ENCODE measurements at regions of chr7 and their contacts with region 1.

Region 1: DNA sequence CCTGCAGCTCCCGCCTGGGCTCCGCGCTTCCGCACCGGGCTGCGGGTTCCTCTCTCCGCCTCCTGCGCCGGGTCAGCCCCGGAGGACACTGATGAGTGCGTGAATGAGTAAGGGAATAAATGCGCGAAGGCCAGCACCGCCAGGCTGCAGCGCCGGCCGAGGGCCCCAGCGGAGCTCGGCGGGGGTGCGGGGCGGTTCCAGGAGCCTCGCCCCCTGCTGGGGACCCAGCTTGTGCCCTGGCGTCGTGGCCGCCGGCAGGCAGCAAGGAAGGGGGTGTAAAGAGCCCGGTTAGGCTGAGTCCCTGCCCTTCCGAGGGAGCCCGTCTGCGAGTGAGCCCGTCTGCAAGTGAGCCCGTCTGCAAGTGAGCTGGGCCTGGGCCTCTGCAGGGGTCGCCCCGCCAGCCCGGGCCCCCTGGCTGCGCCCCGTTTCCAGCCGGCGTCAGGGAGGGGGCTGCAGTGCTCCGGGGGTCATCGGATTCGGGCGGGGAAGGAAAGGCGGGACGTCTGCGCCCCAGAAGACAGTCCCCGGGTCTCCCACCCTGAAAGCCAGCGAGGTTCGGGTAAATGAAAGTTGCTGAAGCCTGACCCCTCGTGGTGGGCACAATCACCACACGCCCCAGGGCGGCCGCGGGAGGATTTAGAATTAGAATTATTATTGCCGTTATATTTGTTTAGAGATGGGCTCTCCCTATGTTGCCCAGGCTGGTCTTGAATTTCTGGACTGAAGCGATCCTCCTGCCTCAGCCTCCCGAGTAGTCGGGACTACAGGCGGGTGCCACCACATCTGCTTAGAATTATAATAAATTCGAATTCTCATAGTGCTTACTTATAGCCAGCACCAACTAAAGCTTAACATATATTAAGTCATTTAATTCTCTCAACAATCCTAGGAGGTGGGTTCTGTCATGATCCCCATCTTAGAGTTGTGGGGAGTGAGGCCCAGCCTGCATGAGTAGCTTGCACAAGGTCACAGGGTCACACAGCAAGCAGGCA is 8.6 kb upstream of the CRYGN start:
- DNase-seq: peak; percentile 80
- ATAC-seq: peak; percentile 95

Region 2: GRCh38 chr7:151368136-151368571 is 80.4 kb before region 1 on chr7:
- intact Hi-C with region 1: loop called (anchors 2 kb)
- DNase-seq: peak; percentile 90
- ATAC-seq: peak; percentile 98

Region 3: DNA sequence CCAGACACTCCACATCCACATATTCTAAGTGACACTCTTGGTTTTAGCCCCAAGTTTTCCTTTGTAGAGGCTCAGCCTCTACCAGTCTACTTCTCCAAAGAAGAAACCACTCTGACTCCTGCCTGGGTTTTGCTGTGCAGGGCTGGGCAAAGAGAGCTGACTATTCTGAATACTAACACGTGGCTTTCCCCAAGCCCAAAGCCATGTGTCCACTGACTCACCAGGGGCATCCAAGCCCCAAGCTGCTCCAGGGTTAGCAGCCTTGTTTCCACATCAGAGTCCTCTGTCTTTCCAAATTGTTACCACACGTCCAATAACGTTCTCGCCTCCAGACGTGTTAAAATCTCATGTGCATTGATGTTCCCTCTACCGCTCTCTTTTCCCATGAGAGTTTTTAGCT is 516.4 kb after region 1 on chr7:
- intact Hi-C with region 1: no loop called
- DNase-seq: peak; percentile 44
- ATAC-seq: peak; percentile 61

Measured in Right ventricle myocardium superior (tissue), 1 donor.